Ovary (tissue), 10 donors: ENCODE measurements at regions of chr15 and their contacts with region 1.

Region 1: GRCh38 chr15:74615508-74616365 is at the start of gene CLK3:
- DNase-seq: peak; percentile 96 to 98 (median 97)
- H3K4me3 ChIP-seq: peak within 1 kb of the TSS; percentile 91
- H3K27ac ChIP-seq: peak within 1 kb of the TSS; percentile 90 to 91
- H3K4me1 ChIP-seq: peaks cover 6% of the 10 kb centered on the region
- H3K27me3 ChIP-seq: no peaks in the 10 kb centered on the region
- CTCF ChIP-seq: no peak
- EP300 ChIP-seq: no peak
- POLR2A ChIP-seq: peak; percentile 71
- total RNA-seq, gene CLK3: 56.8 to 110 (median 67.2) TPM

Region 2: GRCh38 chr15:74454764-74455500 is 160.8 kb before region 1 on chr15:
- intact Hi-C with region 1: loop called in 1 of 4 experiments (anchors 5 kb)
- DNase-seq: no peak
- H3K4me3 ChIP-seq: no peak overlapping the region
- H3K27ac ChIP-seq: no peak overlapping the region
- H3K4me1 ChIP-seq: no peaks in the 10 kb centered on the region
- H3K27me3 ChIP-seq: no peaks in the 10 kb centered on the region
- CTCF ChIP-seq: no peak
- EP300 ChIP-seq: no peak
- POLR2A ChIP-seq: no peak

Region 3: DNA sequence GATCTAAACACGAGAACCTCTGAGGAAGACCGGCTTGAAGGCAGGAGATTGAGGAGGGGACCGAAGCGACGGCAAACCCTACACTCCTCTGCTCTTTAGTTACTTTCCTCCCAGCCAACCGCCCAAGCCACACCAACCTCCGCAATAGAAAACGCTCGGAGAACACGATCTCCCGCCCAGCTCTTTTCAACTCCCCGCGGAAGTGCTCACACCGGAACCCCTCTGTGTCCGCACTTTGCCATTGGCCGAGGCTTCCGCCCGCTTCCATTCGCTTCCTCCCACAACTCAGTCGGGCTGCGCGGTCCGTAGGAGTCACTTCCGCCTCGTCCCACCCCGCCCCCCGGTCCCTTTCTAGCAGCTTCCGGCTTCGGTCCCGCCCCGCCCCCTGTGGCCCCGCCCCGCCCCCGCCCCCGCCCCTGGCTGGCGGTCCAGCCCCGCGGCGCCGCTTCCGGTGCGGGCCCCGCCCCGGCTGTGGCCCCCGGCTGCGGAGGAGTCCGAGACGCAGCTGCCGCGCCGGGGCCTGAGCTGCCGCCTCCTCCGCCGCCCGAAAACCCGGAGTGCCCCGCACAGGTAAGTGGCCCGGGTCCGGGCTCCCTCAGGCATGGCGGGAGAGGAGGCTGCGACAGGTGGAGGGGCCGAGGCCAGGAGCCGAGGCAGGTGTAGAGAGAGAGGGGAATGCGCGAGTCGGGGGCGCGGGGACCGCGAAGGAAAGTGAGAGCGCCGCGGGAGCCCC is 74.8 kb before region 1 on chr15 and contains the start of gene ARID3B:
- intact Hi-C with region 1: loop called in 3 of 4 experiments (anchors 2 to 5 kb)
- DNase-seq: peak; percentile 95 to 98 (median 96)
- H3K4me3 ChIP-seq: peak within 1 kb of the TSS; percentile 69
- H3K27ac ChIP-seq: no peak within 1 kb of the TSS
- H3K4me1 ChIP-seq: peaks cover 9% of the 10 kb centered on the region
- H3K27me3 ChIP-seq: no peaks in the 10 kb centered on the region
- CTCF ChIP-seq: no peak
- EP300 ChIP-seq: no peak
- POLR2A ChIP-seq: no peak
- total RNA-seq, gene ARID3B: 1.6 to 4.9 (median 2.8) TPM

Region 4: DNA sequence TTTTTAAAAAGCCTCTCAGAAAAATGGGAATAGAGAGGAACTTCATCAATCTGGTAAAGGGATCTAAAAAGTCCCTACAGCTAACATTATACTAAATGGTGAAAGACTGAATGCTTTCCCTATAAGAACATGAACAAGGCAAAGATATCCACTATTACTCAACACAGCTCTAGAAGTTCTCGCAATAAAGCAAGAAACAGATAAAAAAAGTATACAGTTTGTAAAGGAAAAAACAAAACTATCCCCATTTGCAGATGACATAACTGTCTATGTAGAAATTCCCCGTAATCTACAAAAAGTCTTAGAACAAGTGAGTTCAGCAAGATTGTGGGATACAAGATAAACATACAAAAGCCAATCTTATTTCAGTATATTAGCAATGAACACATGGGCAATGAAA is 64.7 kb after region 1 on chr15:
- intact Hi-C with region 1: no loop called
- DNase-seq: no peak
- H3K4me3 ChIP-seq: no peak overlapping the region
- H3K27ac ChIP-seq: no peak overlapping the region
- H3K4me1 ChIP-seq: no peaks in the 10 kb centered on the region
- H3K27me3 ChIP-seq: no peaks in the 10 kb centered on the region
- CTCF ChIP-seq: no peak
- EP300 ChIP-seq: no peak
- POLR2A ChIP-seq: no peak

Region 5: GRCh38 chr15:74842581-74843444 is 227.1 kb after region 1 on chr15 and contains the start of gene ULK3:
- intact Hi-C with region 1: no loop called
- DNase-seq: peak; percentile 91 to 95 (median 92)
- H3K4me3 ChIP-seq: peak within 1 kb of the TSS; percentile 57
- H3K27ac ChIP-seq: peak within 1 kb of the TSS; percentile 69 to 90
- H3K4me1 ChIP-seq: peaks cover 4% of the 10 kb centered on the region
- H3K27me3 ChIP-seq: no peaks in the 10 kb centered on the region
- CTCF ChIP-seq: peak; percentile 60 to 97 (median 96)
- EP300 ChIP-seq: no peak
- POLR2A ChIP-seq: peak; percentile 10
- total RNA-seq, gene ULK3: 25.2 to 45.7 (median 27.8) TPM